GM18951 (cell line): ENCODE measurements at regions of chr20 and their contacts with region 1.

Region 1: GRCh38 chr20:8305449-8305978 is 173.4 kb downstream of the PLCB1 start:
- POLR2A ChIP-seq: no peak

Region 2: GRCh38 chr20:8131598-8132483 is 173.7 kb before region 1 on chr20 and contains the start of gene PLCB1:
- in situ Hi-C with region 1: loop called (anchors 25 kb)
- POLR2A ChIP-seq: no peak

Region 3: DNA sequence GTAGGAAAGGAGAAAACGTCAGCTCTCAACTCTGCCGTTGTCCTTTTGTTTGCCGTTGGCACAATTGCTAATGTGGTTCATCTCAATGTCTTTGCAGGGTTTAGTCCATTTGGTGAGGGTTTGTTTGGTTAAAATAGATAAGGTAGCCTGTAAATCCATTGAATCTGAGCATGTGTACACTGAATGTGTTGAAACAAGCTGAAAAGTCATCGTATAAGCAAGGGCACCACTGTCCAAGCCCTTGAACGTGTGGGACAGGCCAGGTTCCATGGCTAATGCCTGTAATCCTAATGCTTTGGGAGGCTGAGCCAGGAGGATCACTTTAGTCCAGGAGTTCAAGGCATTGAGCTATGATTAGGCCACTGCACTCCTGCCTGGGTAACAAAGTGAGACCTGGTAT is 538.7 kb after region 1 on chr20:
- in situ Hi-C with region 1: no loop called
- POLR2A ChIP-seq: no peak